ENCODE measurements at regions of chr5 and their contacts with region 1.

Region 1: GRCh38 chr5:11268891-11269290 is 507.9 kb upstream of the DAP start:
- DNase-seq: no peak
- ATAC-seq: no peak
- H3K4me3 Mint-ChIP-seq: no peak overlapping the region
- H3K27ac Mint-ChIP-seq: no peak overlapping the region
- H3K4me1 Mint-ChIP-seq: no peaks in the 10 kb centered on the region
- H3K27me3 Mint-ChIP-seq: peaks cover 2% of the 10 kb centered on the region

Region 2: GRCh38 chr5:11289740-11290139 is 20.8 kb after region 1 on chr5:
- CTCF ChIA-PET with region 1: no interaction called
- POLR2A ChIA-PET with region 1: no interaction called
- intact Hi-C with region 1: no loop called
- DNase-seq: no peak
- ATAC-seq: no peak
- H3K4me3 Mint-ChIP-seq: no peak overlapping the region
- H3K27ac Mint-ChIP-seq: no peak overlapping the region
- H3K4me1 Mint-ChIP-seq: no peaks in the 10 kb centered on the region
- H3K27me3 Mint-ChIP-seq: peaks cover 10% of the 10 kb centered on the region

Region 3: GRCh38 chr5:11494340-11494739 is 225.4 kb after region 1 on chr5:
- CTCF ChIA-PET with region 1: no interaction called
- POLR2A ChIA-PET with region 1: no interaction called
- intact Hi-C with region 1: loop called in 1 of 2 experiments (anchors 5 kb)
- DNase-seq: peak; percentile 5
- ATAC-seq: no peak
- H3K4me3 Mint-ChIP-seq: no peak overlapping the region
- H3K27ac Mint-ChIP-seq: no peak overlapping the region
- H3K4me1 Mint-ChIP-seq: no peaks in the 10 kb centered on the region
- H3K27me3 Mint-ChIP-seq: peaks cover 2% of the 10 kb centered on the region

Region 4: GRCh38 chr5:11540112-11540511 is 271.2 kb after region 1 on chr5:
- CTCF ChIA-PET with region 1: no interaction called
- POLR2A ChIA-PET with region 1: no interaction called
- intact Hi-C with region 1: no loop called
- DNase-seq: no peak
- ATAC-seq: no peak
- H3K4me3 Mint-ChIP-seq: no peak overlapping the region
- H3K27ac Mint-ChIP-seq: no peak overlapping the region
- H3K4me1 Mint-ChIP-seq: no peaks in the 10 kb centered on the region
- H3K27me3 Mint-ChIP-seq: peaks cover 6% of the 10 kb centered on the region

Region 5: GRCh38 chr5:11719888-11720481 is 451.1 kb after region 1 on chr5:
- CTCF ChIA-PET with region 1: no interaction called
- POLR2A ChIA-PET with region 1: no interaction called
- intact Hi-C with region 1: loop called in 1 of 2 experiments (anchors 5 kb)
- DNase-seq: peak; percentile 45
- ATAC-seq: no peak
- H3K4me3 Mint-ChIP-seq: no peak overlapping the region
- H3K27ac Mint-ChIP-seq: no peak overlapping the region
- H3K4me1 Mint-ChIP-seq: no peaks in the 10 kb centered on the region
- H3K27me3 Mint-ChIP-seq: no peaks in the 10 kb centered on the region

Region 6: DNA sequence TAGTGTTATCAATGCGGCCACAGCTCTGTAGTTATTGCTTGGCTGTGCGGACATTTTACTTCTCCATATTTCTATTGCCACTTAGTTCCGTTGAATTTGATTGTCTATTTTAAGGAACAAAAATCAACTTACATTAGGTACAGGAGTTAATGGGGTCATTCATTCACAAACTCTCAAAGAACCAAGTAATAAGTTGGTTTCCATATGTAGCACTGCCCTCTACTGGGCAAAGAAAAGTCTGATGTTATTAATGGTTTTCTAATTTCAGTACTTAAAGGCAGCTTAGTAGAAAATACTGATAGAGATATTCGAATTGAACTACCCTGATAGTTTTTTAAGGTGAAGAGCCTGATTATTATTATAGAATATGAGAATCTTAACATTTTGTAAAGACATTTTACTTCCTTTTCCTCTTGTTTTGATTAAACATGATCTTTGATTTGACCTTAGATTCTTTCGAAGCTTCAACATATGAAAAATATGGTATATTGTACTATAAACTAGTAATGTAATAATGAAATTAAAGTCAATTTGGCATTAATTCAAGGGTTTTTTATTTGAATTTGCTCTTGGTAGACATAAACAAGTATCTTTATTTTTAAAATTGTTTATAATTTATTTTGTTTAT is 754.8 kb after region 1 on chr5:
- CTCF ChIA-PET with region 1: no interaction called
- POLR2A ChIA-PET with region 1: no interaction called
- intact Hi-C with region 1: loop called in 1 of 2 experiments (anchors 5 kb)
- DNase-seq: no peak
- ATAC-seq: no peak
- H3K4me3 Mint-ChIP-seq: no peak overlapping the region
- H3K27ac Mint-ChIP-seq: no peak overlapping the region
- H3K4me1 Mint-ChIP-seq: no peaks in the 10 kb centered on the region
- H3K27me3 Mint-ChIP-seq: no peaks in the 10 kb centered on the region

Measured in activated CD4-positive, alpha-beta T cell treated with anti-CD3 and anti-CD28 coated beads for 36 hours (primary cell).